K562 (cell line): ENCODE measurements at regions of chr22 and their contacts with region 1.

Region 1: DNA sequence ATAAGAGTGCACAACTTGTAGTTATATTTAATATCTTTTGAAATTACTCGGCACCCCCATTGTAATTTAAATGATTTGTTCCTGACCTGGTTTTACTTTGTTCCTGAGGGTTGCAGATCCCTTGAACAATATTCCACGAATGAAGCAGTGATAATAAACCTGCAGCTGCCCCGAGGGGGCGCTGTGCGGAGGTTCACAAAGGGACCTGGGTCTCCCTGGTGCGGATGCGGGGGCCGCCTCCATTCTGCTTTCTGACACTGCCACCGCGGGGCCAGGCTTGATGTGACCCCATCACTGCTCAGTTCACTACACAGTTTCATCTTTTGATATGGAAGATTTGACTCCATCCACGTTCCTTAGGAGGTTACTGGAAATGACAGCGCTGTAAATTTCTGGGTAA is 62.9 kb upstream of the PRODH start:
- DNase-seq: peak; percentile 80 to 94 (median 86)
- ATAC-seq: peak; percentile 91
- H3K4me3 ChIP-seq: no peak overlapping the region
- H3K27ac ChIP-seq: no peak overlapping the region
- H3K4me1 ChIP-seq: peaks cover 0 to 7% of the 10 kb centered on the region in 2 experiments; a peak in 1 of 5 replicates
- H3K27me3 ChIP-seq: peaks cover 70 to 72% of the 10 kb centered on the region in 2 experiments
- CTCF ChIP-seq: peak; percentile 96 to 99 (median 98)
- EP300 ChIP-seq: 0 out of 2 replicates have a peak, but pooled peaks have one; percentile 11
- POLR2A ChIP-seq: no peak
- RAD21 ChIP-seq: peak in 1 of 2 experiments; percentile 76; a peak in 2 of 4 replicates

Region 2: DNA sequence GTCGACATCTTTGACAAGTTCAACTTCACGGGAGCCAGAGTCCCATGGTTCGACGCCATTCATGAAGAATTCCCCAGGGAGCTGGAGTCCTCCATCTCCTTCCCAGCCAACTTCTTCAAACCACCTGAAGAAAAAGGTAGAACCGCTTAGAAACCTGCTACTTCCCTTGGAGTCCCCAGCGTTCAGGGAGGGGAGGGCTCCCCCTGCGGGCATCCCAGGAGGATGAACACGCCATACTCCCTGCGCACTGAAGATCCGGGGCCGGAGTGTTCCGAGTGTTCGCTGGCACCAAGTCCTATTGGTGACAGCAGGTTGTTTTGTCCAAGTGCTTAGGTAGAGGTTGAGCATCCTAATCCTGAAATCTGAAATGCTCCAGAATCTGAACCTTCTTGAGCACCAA is 11.2 kb before region 1 on chr22:
- CTCF ChIA-PET with region 1: no interaction called
- POLR2A ChIA-PET with region 1: interaction called, 27 read pairs
- in situ Hi-C with region 1: no loop called
- intact Hi-C with region 1: no loop called
- DNase-seq: peak; percentile 77 to 92 (median 84)
- ATAC-seq: peak; percentile 92
- H3K4me3 ChIP-seq: no peak overlapping the region
- H3K27ac ChIP-seq: no peak overlapping the region
- H3K4me1 ChIP-seq: peaks cover 0 to 15% of the 10 kb centered on the region in 2 experiments; a peak in 1 of 5 replicates
- H3K27me3 ChIP-seq: peaks cover 45 to 76% of the 10 kb centered on the region in 2 experiments
- CTCF ChIP-seq: peak; percentile 88 to 94 (median 90)
- EP300 ChIP-seq: no peak
- POLR2A ChIP-seq: no peak
- RAD21 ChIP-seq: peak in 1 of 2 experiments; percentile 82; a peak in 2 of 4 replicates

Region 3: DNA sequence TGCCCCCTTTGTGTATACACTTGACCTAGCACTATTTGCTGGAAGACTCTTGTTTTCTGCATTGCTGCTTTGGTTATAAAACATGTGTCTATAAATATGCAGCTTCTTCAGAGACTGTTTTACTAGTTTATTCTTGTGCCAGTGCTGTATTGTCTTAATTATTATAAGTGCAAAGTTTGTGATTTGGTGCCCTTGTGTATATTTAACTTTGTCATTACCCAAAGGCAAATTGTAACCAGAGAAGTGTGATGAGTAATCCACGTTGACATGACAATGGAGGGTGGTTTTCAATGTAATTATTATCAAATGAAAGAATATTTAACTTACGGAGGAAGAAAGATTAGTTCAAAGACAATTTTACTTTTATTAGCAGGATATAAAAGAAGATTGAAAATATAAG is 12.1 kb after region 1 on chr22:
- CTCF ChIA-PET with region 1: interaction called, 4 read pairs
- POLR2A ChIA-PET with region 1: interaction called, 13 read pairs
- in situ Hi-C with region 1: no loop called
- intact Hi-C with region 1: no loop called
- DNase-seq: no peak
- ATAC-seq: no peak
- H3K4me3 ChIP-seq: no peak overlapping the region
- H3K27ac ChIP-seq: no peak overlapping the region
- H3K4me1 ChIP-seq: no peaks in the 10 kb centered on the region; a peak in 1 of 5 replicates
- H3K27me3 ChIP-seq: peaks cover 22 to 39% of the 10 kb centered on the region in 2 experiments
- CTCF ChIP-seq: no peak
- EP300 ChIP-seq: no peak
- POLR2A ChIP-seq: no peak
- RAD21 ChIP-seq: no peak

Region 4: DNA sequence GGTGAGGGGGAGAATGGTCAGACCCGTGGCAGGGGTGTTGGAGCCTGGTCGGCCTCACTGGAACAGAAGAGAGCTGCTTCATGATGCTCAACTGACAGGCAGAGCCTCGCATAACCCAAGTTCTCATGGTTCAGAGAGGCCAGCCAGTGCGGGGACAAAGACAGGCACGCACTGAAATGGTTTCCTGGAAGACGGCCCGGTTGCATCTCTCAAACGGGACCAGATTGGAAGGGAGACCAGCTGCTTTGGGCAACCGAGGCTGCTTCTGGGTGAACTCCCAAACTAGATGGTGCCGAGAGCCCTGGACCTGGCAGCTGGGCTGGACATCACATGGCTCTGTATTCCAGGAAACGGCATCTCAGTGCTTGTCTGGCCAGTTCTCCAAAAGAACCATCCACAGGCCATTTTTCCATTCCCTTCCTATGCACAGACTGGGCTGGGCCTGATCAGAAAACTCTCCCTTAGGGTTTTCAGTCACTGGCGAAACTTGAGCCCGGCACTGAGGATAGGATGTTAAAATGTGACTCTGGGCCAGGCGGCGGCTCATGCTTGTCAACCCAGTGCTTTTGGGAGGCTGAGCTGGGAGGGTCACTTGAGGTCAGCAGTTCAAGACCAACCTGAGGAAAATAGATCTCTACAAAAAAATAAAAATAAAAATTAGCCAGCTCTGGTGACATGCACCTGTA is 17.2 kb after region 1 on chr22:
- CTCF ChIA-PET with region 1: interaction called, 3 read pairs
- POLR2A ChIA-PET with region 1: interaction called, 13 read pairs
- in situ Hi-C with region 1: no loop called
- intact Hi-C with region 1: no loop called
- DNase-seq: peak in 2 of 4 experiments; percentile 25 to 26
- ATAC-seq: peak; percentile 25
- H3K4me3 ChIP-seq: no peak overlapping the region
- H3K27ac ChIP-seq: no peak overlapping the region
- H3K4me1 ChIP-seq: no peaks in the 10 kb centered on the region; a peak in 1 of 5 replicates
- H3K27me3 ChIP-seq: peaks cover 50 to 64% of the 10 kb centered on the region in 2 experiments
- CTCF ChIP-seq: no peak
- EP300 ChIP-seq: no peak
- POLR2A ChIP-seq: no peak
- RAD21 ChIP-seq: no peak